ENCODE measurements at regions of chr19 and their contacts with region 1.

Region 1: GRCh38 chr19:3075895-3076431 is 13.7 kb upstream of the TLE5 start:
- DNase-seq: no peak
- H3K4me3 ChIP-seq: 0 out of 2 replicates have a peak overlapping the region, but pooled peaks have one; percentile 6
- H3K27me3 ChIP-seq: no peaks in the 10 kb centered on the region
- CTCF ChIP-seq: peak; percentile 88

Region 2: GRCh38 chr19:2962045-2962561 is 113.9 kb before region 1 on chr19:
- CTCF ChIA-PET with region 1: interaction called, 24 read pairs
- POLR2A ChIA-PET with region 1: no interaction called
- DNase-seq: peak; percentile 37
- H3K4me3 ChIP-seq: no peak overlapping the region
- H3K27me3 ChIP-seq: no peaks in the 10 kb centered on the region
- CTCF ChIP-seq: peak; percentile 60

Region 3: GRCh38 chr19:3094601-3095437 is 18.9 kb after region 1 on chr19:
- CTCF ChIA-PET with region 1: interaction called, 12 read pairs
- POLR2A ChIA-PET with region 1: no interaction called
- DNase-seq: no peak
- H3K4me3 ChIP-seq: peak overlapping the region; percentile 80
- H3K27me3 ChIP-seq: no peaks in the 10 kb centered on the region
- CTCF ChIP-seq: no peak

Region 4: GRCh38 chr19:3108775-3109174 is 32.8 kb after region 1 on chr19:
- CTCF ChIA-PET with region 1: interaction called, 23 read pairs
- POLR2A ChIA-PET with region 1: no interaction called
- DNase-seq: no peak
- H3K4me3 ChIP-seq: no peak overlapping the region
- H3K27me3 ChIP-seq: no peaks in the 10 kb centered on the region
- CTCF ChIP-seq: peak; percentile 93

Region 5: DNA sequence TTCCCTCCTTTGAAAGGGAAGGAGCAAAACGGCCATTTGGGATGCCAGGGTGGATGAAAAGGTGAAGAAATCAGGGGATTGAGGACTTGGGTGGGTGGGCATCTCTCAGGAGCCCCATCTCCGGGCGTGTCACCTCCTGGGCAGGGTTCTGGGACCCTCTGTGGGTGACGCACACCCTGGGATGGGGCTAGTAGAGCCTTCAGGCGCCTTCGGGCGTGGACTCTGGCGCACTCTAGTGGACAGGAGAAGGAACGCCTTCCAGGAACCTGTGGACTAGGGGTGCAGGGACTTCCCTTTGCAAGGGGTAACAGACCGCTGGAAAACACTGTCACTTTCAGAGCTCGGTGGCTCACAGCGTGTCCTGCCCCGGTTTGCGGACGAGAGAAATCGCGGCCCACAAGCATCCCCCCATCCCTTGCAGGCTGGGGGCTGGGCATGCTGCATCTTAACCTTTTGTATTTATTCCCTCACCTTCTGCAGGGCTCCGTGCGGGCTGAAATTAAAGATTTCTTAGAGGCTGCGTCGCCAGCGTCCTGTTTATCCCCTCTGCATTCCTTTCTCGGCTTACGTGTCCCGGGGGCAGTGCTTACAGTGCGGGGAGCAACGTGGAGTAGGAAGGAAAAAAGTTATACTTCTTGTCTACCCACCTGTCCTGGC is 87.4 kb after region 1 on chr19:
- CTCF ChIA-PET with region 1: interaction called, 17 read pairs
- POLR2A ChIA-PET with region 1: no interaction called
- DNase-seq: no peak
- H3K4me3 ChIP-seq: no peak overlapping the region
- H3K27me3 ChIP-seq: no peaks in the 10 kb centered on the region
- CTCF ChIP-seq: peak; percentile 96

Region 6: DNA sequence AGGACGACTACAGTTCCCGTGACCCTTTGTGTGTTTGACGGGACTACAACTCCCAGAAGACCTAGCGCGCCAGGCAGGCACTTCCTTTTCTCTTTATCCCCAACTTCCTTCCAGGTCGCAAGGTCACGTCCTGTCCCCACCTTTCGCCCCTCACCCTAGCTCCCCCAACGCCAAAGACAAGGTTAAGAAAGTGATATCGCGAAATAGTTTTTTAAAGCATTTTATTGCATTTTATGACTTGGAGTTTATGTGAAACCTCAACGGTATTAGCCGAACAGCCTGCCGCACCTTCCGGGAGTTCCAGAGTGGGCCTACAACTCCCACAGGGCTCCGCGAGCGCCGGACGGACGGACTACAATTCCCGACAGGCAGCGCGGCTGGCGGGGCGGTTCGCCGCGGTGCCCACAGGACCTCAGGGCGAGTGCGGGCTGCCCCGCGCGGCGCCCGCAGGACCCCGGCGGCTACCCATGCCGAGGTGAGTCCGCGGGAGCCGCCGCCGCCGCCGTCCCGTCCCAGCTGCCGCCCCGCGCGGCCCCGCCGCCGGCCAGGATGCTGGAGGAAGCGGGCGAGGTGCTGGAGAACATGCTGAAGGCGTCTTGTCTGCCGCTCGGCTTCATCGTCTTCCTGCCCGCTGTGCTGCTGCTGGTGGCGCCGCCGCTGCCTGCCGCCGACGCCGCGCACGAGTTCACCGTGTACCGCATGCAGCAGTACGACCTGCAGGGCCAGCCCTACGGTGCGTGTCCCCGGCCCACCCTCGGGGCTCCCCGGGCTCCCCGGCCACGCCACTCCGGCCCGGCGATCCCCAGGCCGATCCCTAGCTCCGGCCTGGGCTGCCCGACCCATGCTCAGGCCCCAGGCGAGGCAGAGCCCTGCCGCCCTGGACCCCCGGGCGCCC is 109.8 kb after region 1 on chr19 and contains the start of gene NCLN:
- CTCF ChIA-PET with region 1: no interaction called
- POLR2A ChIA-PET with region 1: no interaction called
- DNase-seq: peak; percentile 73
- H3K4me3 ChIP-seq: peak within 1 kb of the TSS; percentile 72
- H3K27me3 ChIP-seq: no peaks in the 10 kb centered on the region
- CTCF ChIP-seq: no peak
- polyA plus RNA-seq, gene NCLN: 45.3 and 75.8 TPM in 2 replicates